ENCODE measurements at regions of chr16 and their contacts with region 1.

Region 1: DNA sequence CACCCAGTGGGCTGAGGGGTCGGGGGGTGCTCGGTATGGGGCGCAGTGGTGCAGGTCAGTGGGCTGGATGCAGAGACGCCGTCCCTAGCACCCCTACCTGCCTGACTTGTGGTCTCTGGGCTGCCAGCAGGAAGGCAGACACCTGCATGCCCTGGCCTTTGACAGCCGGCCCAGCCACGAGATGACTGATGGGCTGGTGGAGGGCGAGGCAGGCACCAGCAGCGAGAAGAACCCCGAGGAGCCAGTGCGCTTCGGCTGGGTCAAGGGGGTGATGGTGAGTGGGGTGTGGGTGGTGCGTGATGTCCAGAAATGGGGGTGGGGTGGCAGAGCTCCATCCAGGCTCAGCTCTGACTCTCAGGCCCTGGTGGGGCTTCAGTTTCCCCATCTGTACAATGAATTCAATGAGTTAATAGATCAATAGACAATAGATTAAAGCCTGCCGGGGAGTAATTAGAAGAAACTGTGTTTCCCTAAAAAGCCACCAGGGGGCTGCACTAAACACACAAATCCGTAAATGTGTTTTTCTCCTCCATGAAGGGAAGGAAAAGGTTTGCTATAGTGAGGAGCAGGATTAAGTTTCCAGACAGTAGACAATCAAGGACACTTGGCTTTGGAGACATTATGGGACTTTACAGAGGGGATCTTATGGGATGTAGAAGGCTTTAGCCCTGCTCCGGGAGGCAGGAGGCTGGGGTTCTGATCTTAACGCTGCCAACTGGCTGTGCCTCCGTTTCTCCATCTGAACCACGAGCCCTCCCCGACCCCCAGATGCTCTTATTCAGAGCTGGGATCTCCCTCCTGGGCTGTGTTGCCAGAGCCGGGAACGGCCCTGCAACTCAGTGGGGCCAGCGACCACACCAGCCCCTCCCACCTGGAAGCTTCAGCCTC is 2.2 kb downstream of the SLC12A3 start:
- DNase-seq: peak; percentile 72
- CTCF ChIP-seq: peak; percentile 59

Region 2: DNA sequence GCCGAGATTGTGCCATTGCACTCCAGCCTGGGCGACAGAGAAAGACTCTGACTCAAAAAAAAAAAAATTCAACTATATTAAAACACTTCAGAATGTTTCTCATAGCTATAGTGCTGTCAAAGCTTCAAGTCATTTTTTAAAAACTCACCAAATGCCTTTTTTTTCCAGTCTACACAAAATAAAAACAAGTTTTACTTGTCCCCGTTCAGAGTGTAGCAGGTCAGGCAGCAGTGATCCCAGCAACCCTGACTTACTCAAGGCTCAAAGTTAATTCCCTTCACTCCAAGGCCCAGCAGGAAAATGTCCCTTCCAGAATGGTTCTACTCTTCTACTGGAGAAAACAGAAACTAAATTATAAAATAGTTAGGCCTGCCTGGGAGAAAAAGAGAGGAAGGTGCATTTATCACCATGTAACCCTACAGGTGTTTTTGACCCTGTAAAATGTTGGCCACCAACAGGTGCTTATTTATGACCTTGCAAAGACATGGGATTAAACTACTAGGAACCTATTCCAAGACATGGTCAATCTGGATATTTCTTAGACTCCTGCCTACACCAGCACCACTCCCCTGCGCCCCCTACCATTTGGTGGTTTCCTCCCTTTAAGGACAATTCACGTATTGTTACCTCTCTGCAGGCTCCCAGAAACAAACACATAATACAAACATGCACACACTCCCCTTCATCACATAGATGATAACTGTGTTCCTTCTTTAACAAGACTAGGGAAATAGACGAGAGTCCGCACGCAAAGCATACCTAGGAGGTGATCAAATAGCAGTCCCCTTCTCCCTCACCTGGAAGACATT is 447.2 kb before region 1 on chr16:
- CTCF ChIA-PET with region 1: no interaction called
- POLR2A ChIA-PET with region 1: no interaction called
- DNase-seq: no peak
- CTCF ChIP-seq: no peak

Region 3: GRCh38 chr16:56851671-56852400 is 15.4 kb before region 1 on chr16:
- CTCF ChIA-PET with region 1: interaction called, 30 read pairs
- POLR2A ChIA-PET with region 1: interaction called, 4 read pairs
- DNase-seq: no peak
- CTCF ChIP-seq: peak; percentile 20

Region 4: DNA sequence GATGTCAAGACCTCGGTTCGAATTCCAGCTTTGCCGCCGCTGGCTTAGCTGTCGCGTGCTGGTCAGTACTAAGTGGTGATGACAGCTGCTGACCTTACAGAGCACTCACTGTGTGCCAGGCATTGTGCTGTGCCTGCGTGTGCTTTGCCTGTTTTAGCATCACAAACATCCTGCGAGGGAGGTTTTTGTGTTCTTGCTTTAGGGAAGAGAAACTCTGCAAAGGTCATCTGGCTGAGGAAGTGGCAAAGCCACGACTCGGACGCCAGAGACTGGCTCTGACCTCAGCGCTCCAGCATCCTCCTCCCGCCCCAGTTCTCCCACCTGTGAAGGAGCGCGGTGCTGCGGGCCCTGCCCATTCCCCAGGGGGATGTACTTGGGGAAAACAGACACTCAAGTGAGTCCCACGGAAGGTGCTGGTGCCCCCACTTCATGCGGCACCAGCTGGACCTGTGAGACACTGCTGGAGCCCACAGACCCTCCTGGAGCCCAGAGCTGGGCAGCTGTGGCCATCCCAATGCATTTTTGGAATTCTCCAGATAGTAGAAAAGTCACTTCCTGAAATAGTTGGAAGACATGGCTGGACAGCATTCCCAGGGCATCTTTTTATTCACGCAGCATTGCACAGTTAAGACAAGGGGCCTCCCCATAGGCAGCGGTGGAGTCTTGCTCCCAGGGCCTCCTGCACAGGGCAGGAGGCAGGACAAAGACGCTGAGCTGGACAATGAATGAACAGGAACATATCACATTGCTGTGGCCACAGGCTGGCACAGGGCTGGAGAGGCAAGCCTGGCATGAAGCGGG is 44.8 kb after region 1 on chr16:
- CTCF ChIA-PET with region 1: interaction called, 12 read pairs
- POLR2A ChIA-PET with region 1: no interaction called
- DNase-seq: peak; percentile 83
- CTCF ChIP-seq: no peak

Region 5: GRCh38 chr16:56944954-56945839 is 78.0 kb after region 1 on chr16:
- CTCF ChIA-PET with region 1: interaction called, 54 read pairs
- POLR2A ChIA-PET with region 1: interaction called, 5 read pairs
- DNase-seq: no peak
- CTCF ChIP-seq: no peak

Region 6: GRCh38 chr16:57226701-57227621 is 359.8 kb after region 1 on chr16:
- CTCF ChIA-PET with region 1: no interaction called
- POLR2A ChIA-PET with region 1: no interaction called
- DNase-seq: no peak
- CTCF ChIP-seq: no peak